Caki2 (cell line): ENCODE measurements at regions of chr6 and their contacts with region 1.

Region 1: DNA sequence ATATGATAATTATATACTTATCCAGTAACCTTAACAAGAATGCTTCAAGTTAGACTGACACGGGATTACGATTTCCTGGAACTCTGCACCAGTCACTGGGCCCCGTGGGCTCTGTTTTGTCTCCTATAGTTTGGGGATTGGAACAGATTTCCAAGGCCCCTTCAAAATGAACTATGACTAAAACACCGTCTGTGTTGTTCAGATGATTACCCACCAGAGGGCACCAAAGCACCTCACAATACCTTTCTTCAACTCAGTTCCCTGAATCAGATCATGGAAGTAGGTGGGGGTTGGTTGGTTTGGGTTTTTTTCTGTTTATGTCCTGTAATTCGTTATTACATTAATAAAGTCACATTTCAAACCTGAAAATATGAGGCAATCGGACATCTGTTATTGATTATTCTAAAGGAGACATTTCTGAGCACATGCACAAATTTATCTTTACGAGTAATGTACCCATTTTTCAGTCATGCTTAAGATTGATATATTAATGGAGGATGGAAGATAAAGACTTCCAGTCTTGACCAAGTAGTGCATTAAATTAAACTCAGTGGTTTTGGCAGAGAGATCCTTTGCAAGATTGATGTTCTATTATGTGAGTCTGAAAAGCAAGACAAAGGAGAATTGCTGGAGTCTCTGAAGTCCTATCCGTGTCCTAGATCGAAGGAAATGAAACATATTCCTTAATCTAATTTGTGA is 112.0 kb upstream of the COL21A1 start:
- DNase-seq: peak; percentile 61

Region 2: GRCh38 chr6:56246881-56247653 is 112.3 kb before region 1 on chr6 and contains the start of gene COL21A1:
- in situ Hi-C with region 1: no loop called
- DNase-seq: no peak
- total RNA-seq, gene COL21A1: not detected in 2 replicates

Region 3: GRCh38 chr6:56595490-56596122 is 236.3 kb after region 1 on chr6:
- in situ Hi-C with region 1: loop called (anchors 25 kb)
- DNase-seq: peak; percentile 43